Naive thymus-derived CD8-positive, alpha-beta T cell (primary cell): ENCODE measurements at regions of chr12 and their contacts with region 1.

Region 1: DNA sequence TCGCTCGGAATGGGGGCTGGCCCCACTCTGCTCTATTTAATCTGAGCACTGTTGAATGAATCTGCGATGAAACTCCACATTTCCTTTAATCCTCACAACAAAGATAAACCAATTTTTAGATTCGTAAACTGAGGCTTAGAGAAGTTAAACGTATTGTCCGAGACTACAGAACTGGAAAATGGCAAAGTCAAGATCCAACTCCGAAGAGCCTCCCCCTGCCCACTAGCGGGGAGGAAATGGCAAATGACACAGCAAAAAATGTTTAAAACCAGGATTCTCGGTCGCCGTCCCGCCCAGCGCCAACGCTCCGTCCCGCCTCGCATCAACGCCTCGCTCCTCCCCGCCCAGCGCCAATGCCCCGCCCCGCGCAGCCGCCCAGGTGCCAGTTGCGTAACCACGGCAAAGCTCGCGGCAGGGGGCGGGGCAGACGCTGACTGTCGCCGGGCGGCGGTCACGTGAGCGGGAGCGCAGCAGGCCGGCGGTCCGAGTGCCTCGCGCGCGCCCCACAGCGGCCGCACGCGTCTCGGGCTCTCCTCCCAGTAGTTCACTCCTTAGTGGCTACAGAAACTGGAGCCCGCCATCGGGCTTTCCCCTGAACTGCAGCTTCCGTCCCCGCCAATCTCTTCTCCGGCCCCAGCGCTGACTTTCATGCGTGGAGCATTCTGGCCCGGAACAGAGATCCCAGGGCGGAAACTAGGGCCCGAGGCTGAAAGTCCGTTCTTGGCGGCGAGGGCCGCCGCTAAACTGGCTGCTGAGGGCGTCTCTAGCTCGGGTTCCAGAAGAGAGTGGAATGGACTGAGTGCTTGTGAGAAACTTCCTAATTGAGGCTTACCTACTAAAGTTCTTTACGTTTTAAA is 13.6 kb upstream of the LRRC23 start:
- DNase-seq: peak; percentile 92 to 100 (median 97)
- ATAC-seq: peak; percentile 94 to 95
- H3K4me3 Mint-ChIP-seq: peak overlapping the region; percentile 77 to 90 (median 84)
- H3K27ac Mint-ChIP-seq: peak overlapping the region; percentile 88 to 96 (median 94)
- H3K4me1 Mint-ChIP-seq: peaks cover 0 to 17% (median 15%) of the 10 kb centered on the region in 4 donors
- H3K27me3 Mint-ChIP-seq: no peaks in the 10 kb centered on the region

Region 2: GRCh38 chr12:6723607-6724396 is 167.2 kb before region 1 on chr12 and contains the start of gene COPS7A:
- POLR2A ChIA-PET with region 1: no interaction called
- DNase-seq: peak; percentile 73 to 98 (median 92)
- ATAC-seq: peak; percentile 85 to 90
- H3K4me3 Mint-ChIP-seq: peak within 1 kb of the TSS; percentile 74 to 99 (median 93)
- H3K27ac Mint-ChIP-seq: peak within 1 kb of the TSS; percentile 92 to 98 (median 96)
- H3K4me1 Mint-ChIP-seq: peaks cover 19 to 32% (median 24%) of the 10 kb centered on the region in 4 donors
- H3K27me3 Mint-ChIP-seq: no peaks in the 10 kb centered on the region
- polyA plus RNA-seq, gene COPS7A: 34.9 to 42.4 (median 36.2) TPM

Region 3: DNA sequence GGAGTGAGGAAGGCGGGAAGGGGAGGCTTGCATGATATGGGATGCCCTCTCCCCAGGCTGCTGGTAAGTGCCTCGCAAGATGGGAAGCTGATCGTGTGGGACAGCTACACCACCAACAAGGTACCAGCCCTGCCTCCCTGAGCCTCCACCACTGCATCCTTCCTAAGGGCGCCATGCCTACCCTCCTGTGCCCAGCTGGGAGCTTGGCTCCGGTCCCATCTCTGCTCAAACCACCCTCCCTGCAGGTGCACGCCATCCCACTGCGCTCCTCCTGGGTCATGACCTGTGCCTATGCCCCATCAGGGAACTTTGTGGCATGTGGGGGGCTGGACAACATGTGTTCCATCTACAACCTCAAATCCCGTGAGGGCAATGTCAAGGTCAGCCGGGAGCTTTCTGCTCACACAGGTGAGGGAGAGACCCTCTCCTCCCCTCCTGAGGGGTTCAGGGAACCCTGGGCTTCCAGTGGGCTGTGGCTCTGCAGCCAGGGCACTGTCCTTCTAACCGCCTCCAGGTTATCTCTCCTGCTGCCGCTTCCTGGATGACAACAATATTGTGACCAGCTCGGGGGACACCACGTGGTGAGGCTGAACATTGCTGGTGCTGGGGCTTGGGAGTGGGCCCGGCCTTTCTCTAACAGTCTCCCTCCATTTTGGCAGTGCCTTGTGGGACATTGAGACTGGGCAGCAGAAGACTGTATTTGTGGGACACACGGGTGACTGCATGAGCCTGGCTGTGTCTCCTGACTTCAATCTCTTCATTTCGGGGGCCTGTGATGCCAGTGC is 47.7 kb before region 1 on chr12:
- POLR2A ChIA-PET with region 1: no interaction called
- DNase-seq: no peak
- ATAC-seq: no peak
- H3K4me3 Mint-ChIP-seq: no peak overlapping the region
- H3K27ac Mint-ChIP-seq: no peak overlapping the region
- H3K4me1 Mint-ChIP-seq: no peaks in the 10 kb centered on the region
- H3K27me3 Mint-ChIP-seq: no peaks in the 10 kb centered on the region

Region 4: GRCh38 chr12:6867413-6868210 is 23.4 kb before region 1 on chr12 and contains the start of gene TPI1:
- POLR2A ChIA-PET with region 1: interaction called, 88 read pairs
- DNase-seq: peak in 9 of 10 donors; percentile 38 to 87 (median 60)
- ATAC-seq: peak; percentile 70 to 72
- H3K4me3 Mint-ChIP-seq: peak within 1 kb of the TSS; percentile 84 to 95 (median 88)
- H3K27ac Mint-ChIP-seq: peak within 1 kb of the TSS; percentile 84 to 96 (median 89)
- H3K4me1 Mint-ChIP-seq: peaks cover 33 to 62% (median 52%) of the 10 kb centered on the region in 4 donors
- H3K27me3 Mint-ChIP-seq: no peaks in the 10 kb centered on the region
- polyA plus RNA-seq, gene TPI1: 372 to 497 (median 479) TPM

Region 5: DNA sequence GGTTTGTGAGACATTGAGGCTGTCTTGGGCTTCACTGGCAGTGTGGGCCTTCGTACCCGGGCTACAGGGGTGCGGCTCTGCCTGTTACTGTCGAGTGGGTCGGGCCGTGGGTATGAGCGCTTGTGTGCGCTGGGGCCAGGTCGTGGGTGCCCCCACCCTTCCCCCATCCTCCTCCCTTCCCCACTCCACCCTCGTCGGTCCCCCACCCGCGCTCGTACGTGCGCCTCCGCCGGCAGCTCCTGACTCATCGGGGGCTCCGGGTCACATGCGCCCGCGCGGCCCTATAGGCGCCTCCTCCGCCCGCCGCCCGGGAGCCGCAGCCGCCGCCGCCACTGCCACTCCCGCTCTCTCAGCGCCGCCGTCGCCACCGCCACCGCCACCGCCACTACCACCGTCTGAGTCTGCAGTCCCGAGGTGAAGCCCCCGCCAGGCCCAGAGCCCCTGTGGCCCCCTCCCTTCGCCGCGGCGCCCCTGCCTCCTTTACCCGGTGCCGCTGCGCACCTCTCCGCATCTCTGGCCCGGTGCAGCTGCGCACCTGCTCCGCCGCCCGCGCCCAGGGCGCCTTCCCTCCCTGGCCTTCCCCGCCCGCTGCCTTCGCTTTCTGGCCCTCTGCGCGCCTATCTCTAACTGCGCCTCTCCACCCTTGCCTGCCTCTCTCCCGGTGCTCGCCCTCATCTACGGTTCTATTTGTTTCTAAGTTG is 23.4 kb after region 1 on chr12 and contains the start of gene ENO2:
- POLR2A ChIA-PET with region 1: interaction called, 19 read pairs
- DNase-seq: peak; percentile 77 to 93 (median 82)
- ATAC-seq: peak; percentile 89 to 92
- H3K4me3 Mint-ChIP-seq: peak within 1 kb of the TSS; percentile 91 to 97 (median 94)
- H3K27ac Mint-ChIP-seq: peak within 1 kb of the TSS; percentile 87 to 98 (median 95)
- H3K4me1 Mint-ChIP-seq: peaks cover 16 to 52% (median 27%) of the 10 kb centered on the region in 4 donors
- H3K27me3 Mint-ChIP-seq: no peaks in the 10 kb centered on the region
- polyA plus RNA-seq, gene ENO2: 19.4 to 29.2 (median 19.7) TPM

Region 6: GRCh38 chr12:6970089-6970527 is 79.1 kb after region 1 on chr12:
- POLR2A ChIA-PET with region 1: no interaction called
- DNase-seq: no peak
- ATAC-seq: peak in 1 of 2 donors; percentile 1
- H3K4me3 Mint-ChIP-seq: peak overlapping the region; percentile 95 to 100 (median 100)
- H3K27ac Mint-ChIP-seq: peak overlapping the region; percentile 63 to 100 (median 100)
- H3K4me1 Mint-ChIP-seq: peaks cover 25 to 56% (median 53%) of the 10 kb centered on the region in 4 donors
- H3K27me3 Mint-ChIP-seq: no peaks in the 10 kb centered on the region